ENCODE measurements at regions of chr6 and their contacts with region 1.

Region 1: DNA sequence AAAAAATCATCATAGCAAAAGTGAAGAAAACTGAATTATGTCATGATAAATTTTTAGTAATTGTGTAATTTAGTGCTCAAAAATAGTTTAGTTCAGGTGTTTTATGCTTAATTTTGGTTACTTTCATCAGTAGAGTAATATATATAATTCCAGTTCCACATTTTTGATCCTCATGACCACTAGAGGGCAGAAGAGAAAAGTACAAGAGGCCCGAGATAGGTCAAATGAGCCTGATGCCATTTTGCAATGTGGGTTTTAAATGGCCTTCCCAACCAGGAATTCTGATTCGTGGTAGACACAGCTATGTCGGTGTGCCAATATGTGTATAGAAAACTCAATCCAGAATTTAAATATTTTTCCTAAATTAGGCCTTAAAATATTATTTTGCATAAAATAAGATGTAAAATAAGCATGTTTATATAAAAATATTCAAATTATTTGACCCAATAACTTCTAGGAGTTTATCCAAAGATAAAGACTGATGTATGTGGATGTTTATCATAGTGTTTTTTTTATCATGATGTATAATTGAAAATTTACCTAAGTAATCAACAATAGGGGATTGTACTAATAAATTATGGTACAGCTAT is 159.7 kb upstream of the RPS6KA2 start:
- DNase-seq: no peak
- ATAC-seq: peak; percentile 52 to 57

Region 2: DNA sequence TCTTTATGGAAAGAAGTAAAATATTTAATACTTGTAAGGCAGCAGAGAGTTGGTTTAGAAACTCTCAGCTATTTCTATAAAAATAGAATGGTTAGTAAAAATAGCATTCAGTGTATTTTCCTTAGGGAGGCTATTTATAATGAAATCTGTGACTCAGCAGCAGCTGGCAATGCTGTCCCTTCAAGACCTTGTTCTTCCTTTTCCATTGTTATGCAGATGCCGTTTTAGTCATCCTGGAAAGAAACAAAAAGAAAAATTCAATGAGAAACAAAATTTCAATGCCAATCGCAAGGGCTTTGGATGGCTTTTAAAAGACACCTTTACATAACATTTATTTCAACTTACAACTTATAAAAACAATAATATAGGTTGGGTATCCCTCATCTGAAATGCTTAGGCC is 421.6 kb before region 1 on chr6:
- intact Hi-C with region 1: no loop called
- DNase-seq: no peak
- ATAC-seq: peak; percentile 38 to 74

Region 3: GRCh38 chr6:166830185-166830890 is 43.5 kb after region 1 on chr6:
- intact Hi-C with region 1: no loop called
- DNase-seq: no peak
- ATAC-seq: no peak

Region 4: GRCh38 chr6:166939345-166939744 is 152.5 kb after region 1 on chr6:
- intact Hi-C with region 1: no loop called
- DNase-seq: no peak
- ATAC-seq: no peak

Region 5: GRCh38 chr6:166950443-166950821 is 163.6 kb after region 1 on chr6:
- intact Hi-C with region 1: loop called in 1 of 2 experiments (anchors 2 kb)
- DNase-seq: no peak
- ATAC-seq: peak; percentile 18 to 57

Region 6: DNA sequence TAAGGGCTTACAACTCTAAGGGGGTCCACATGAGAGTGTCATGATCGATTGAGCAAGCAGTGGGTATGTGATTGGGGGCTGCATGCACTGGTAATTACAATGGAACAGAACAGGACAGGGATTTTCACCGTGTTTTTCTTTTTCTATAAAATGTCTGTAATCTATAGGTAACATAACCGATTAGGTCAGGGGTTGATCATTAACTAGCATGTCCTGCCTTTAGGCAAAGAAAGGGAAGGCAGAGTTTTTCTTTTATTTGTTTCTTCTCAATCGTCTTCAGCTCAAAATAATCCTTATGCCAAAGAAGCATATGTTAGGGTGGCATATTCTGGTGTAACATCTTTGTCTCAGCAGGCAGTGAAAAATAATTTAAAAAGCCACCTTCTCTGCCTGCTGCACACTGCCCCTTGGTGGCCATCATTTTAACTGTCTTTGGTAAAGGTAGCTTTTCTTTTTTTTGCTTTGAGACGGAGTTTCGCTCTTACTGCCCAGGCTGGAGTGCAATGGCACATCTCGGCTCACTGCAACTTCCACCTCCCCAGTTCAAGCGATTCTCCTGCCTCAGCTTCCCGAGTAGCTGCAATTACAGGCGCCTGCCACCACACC is 202.7 kb after region 1 on chr6:
- intact Hi-C with region 1: loop called in 1 of 2 experiments (anchors 10 kb)
- DNase-seq: no peak
- ATAC-seq: peak; percentile 50 to 53

Region 7: GRCh38 chr6:167141667-167142432 is 355.1 kb after region 1 on chr6:
- intact Hi-C with region 1: loop called in 1 of 2 experiments (anchors 5 kb)
- DNase-seq: peak; percentile 42
- ATAC-seq: peak; percentile 83 to 88

Region 8: GRCh38 chr6:167306400-167306998 is 519.7 kb after region 1 on chr6:
- intact Hi-C with region 1: no loop called
- DNase-seq: no peak
- ATAC-seq: no peak

Measured in left cardiac atrium (tissue), 4 donors.